Colonic mucosa (tissue), 4 donors: ENCODE measurements at regions of chr10 and their contacts with region 1.

Region 1: DNA sequence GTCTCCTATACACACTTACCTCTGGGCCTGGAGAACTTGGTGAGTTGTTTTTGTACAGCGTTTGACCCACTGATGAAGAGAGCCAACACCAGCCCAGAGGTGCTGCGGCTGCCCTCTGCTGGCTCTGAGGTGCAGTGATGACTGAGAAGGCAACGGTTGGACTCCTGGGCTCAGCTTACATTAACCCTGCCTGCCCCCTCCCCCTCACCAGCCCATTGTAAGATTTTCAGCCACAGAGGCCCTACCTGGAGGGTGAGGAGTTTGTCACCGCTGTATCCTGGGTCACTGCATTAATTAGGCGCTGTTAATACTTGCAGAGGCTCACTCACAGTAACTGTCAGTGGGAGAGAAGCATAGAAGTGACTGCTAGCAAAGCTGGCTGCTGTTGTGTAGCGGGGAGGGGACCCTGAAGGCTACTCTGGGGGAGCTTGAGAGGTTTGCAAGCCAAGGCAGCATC is 19.0 kb upstream of the ANKRD2 start:
- DNase-seq: peak; percentile 47
- H3K4me3 ChIP-seq: no peak overlapping the region
- H3K27ac ChIP-seq: no peak overlapping the region
- H3K4me1 ChIP-seq: no peaks in the 10 kb centered on the region
- H3K27me3 ChIP-seq: no peaks in the 10 kb centered on the region
- CTCF ChIP-seq: peak; percentile 78

Region 2: DNA sequence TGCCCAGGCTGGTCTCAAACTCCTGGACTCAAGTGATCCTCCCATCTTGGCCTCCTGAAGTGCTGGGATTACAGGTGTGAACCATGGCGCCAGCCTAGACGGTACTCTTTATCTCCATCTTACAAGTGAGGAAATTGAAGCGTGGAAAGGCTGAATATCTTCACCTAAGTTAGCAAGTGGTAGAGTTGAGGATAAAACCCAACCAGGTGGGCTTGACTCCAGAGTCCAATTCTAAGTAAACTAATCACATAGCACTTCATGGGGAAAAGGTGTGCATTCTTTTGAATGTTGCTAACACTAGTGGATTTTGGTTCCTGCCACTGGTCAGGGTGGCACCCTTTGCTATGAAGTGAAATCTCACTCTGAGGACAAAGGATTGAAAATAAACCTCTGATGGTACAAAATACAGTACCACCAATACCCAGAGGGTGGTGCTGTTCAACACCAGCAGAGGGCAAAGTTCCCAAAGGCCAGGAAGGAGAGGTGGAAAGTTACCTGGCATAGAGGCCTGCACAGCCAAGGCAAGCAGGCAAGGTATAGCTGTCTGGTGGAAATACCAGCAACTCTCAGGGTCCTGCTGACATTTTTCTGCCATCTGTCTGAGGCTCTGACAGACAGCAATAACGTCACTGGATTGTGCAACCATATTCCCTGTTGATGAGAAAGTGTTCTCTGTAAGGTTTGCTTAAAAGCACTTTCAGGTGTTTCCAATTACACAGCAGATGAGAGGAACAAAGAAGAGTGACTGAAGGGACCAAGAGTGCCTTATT is 90.1 kb before region 1 on chr10:
- intact Hi-C with region 1: loop called (anchors 5 kb)
- DNase-seq: peak; percentile 53
- H3K4me3 ChIP-seq: no peak overlapping the region
- H3K27ac ChIP-seq: no peak overlapping the region
- H3K4me1 ChIP-seq: no peaks in the 10 kb centered on the region
- H3K27me3 ChIP-seq: no peaks in the 10 kb centered on the region
- CTCF ChIP-seq: peak; percentile 87